MCF 10A (cell line): ENCODE measurements at regions of chr1 and their contacts with region 1.

Region 1: GRCh38 chr1:9292361-9293240 is at the start of gene SPSB1:
- DNase-seq: peak; percentile 70
- H3K4me3 Mint-ChIP-seq: peak within 1 kb of the TSS; percentile 60
- H3K27ac Mint-ChIP-seq: no peak within 1 kb of the TSS
- H3K4me1 Mint-ChIP-seq: no peaks in the 10 kb centered on the region
- H3K27me3 Mint-ChIP-seq: no peaks in the 10 kb centered on the region
- CTCF ChIP-seq: peak; percentile 19
- total RNA-seq, gene SPSB1: 8.2 and 16.2 TPM in 2 replicates

Region 2: GRCh38 chr1:9028921-9029705 is 263.5 kb before region 1 on chr1:
- CTCF ChIA-PET with region 1: no interaction called
- POLR2A ChIA-PET with region 1: no interaction called
- intact Hi-C with region 1: no loop called
- DNase-seq: no peak
- H3K4me3 Mint-ChIP-seq: no peak overlapping the region
- H3K27ac Mint-ChIP-seq: no peak overlapping the region
- H3K4me1 Mint-ChIP-seq: no peaks in the 10 kb centered on the region
- H3K27me3 Mint-ChIP-seq: no peaks in the 10 kb centered on the region
- CTCF ChIP-seq: no peak

Region 3: GRCh38 chr1:9270290-9270883 is 22.2 kb before region 1 on chr1:
- CTCF ChIA-PET with region 1: interaction called, 7 read pairs
- POLR2A ChIA-PET with region 1: interaction called, 6 read pairs
- intact Hi-C with region 1: loop called (anchors 1 kb)
- DNase-seq: peak; percentile 47
- H3K4me3 Mint-ChIP-seq: no peak overlapping the region
- H3K27ac Mint-ChIP-seq: no peak overlapping the region
- H3K4me1 Mint-ChIP-seq: peaks cover 12% of the 10 kb centered on the region
- H3K27me3 Mint-ChIP-seq: no peaks in the 10 kb centered on the region
- CTCF ChIP-seq: no peak

Region 4: DNA sequence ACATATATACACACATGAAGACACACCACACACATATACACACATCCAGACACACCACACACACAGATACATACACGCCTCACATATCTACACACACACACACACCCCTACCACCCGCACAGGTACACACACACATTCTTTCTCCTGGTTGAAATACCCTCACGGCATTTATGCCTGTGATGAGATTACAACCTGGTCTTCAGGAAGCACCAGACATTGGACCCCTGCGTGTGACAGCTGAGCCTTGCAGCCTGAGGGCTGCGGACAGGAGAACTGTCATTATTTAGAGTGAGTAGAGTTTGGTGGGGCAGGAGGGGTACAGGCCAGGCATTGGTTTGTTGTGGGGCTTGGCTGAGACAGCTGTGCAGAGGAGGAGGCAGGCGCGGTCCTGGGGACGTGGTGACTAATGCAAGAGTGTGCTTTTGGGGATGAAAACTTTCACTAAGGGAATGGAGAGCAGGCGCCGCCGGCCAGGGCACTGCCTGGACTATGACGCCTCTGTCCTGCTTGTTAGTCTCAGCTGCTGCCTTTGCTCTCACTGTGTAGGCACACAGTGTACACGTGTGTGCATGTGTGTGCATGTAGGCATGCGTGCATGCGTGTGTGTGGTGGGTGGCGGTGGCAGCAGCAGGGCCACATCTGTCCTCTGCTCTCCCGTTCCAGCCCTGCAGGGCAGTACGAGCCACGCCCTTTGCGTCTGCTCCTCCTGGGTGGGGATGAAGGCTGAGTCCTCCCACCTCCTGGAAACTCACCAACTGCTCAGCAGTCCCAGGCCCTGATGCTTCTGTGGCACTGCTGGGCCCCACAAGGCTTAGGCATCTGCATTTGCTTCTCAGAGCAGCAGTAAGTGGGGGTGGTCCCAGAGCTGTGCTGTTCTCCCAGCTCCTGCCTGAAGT is 57.7 kb after region 1 on chr1:
- CTCF ChIA-PET with region 1: no interaction called
- POLR2A ChIA-PET with region 1: interaction called, 3 read pairs
- intact Hi-C with region 1: loop called (anchors 10 kb)
- DNase-seq: peak; percentile 15
- H3K4me3 Mint-ChIP-seq: no peak overlapping the region
- H3K27ac Mint-ChIP-seq: no peak overlapping the region
- H3K4me1 Mint-ChIP-seq: peaks cover 23% of the 10 kb centered on the region
- H3K27me3 Mint-ChIP-seq: no peaks in the 10 kb centered on the region
- CTCF ChIP-seq: no peak

Region 5: DNA sequence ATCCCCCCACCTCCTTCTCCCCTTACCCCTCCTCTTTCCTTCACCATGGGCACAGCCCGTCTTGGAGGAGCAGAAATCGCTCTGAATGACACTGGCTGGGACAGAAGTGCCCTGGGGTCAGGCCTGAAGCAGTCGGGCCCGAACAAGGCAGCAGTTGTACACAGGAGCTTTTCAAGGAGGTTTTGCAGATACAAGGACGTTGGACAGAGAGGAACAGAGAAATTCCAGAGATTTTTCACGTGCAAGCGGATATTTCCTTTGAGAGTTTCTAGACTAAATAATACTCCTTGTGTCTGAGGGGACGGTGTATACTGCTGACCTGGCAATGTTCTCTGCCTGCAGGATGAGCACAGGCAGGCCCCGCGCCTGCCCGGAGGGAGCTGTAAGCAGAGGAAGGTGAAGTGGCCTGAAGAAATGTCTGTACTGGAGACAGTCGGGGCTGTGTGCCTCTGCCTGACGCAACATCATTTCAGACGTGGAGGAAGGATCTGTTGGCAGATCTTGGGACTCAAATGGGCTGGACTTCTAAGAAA is 151.4 kb after region 1 on chr1:
- CTCF ChIA-PET with region 1: interaction called, 3 read pairs
- POLR2A ChIA-PET with region 1: interaction called, 17 read pairs
- intact Hi-C with region 1: no loop called
- DNase-seq: peak; percentile 46
- H3K4me3 Mint-ChIP-seq: peak overlapping the region; percentile 62
- H3K27ac Mint-ChIP-seq: peak overlapping the region; percentile 96
- H3K4me1 Mint-ChIP-seq: peaks cover 36% of the 10 kb centered on the region
- H3K27me3 Mint-ChIP-seq: no peaks in the 10 kb centered on the region
- CTCF ChIP-seq: no peak

Region 6: DNA sequence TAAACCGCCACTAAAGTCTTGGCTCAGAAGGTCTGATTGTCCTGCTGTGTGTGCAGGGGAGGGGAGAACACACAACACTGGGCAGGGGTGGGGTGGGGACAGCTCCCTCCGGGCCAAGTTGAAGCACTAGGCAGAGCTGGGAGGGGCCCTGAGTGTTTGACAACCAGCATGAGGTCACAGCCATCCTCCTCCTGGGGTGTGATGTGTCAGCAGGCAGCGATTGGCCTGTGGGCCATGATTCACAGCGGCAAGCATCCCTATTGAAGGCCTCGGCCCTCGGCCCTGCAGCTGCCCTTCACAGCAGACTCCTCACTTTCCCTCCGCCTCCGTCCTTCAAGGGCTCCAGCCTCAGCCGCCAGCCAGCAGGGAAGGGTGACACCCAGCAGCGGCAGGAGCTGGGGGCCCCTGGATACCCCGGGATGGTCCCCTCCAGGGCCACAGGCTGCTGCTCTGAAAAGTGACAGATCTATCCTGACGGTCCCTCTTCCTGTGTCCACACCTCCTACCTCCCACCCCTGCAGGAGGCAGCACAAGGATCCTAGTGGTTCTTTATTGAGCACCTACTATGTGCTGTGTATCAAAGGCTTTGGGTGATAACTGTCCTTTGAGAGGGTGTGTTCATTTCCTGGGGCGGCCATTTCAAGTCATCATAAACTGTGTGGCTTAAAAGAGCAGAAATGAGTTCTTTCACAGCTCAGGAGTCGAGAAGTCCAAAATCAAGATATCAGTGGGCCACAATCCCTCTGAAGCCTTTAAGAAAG is 180.6 kb after region 1 on chr1:
- CTCF ChIA-PET with region 1: interaction called, 4 read pairs
- POLR2A ChIA-PET with region 1: interaction called, 32 read pairs
- intact Hi-C with region 1: loop called (anchors 5 kb)
- DNase-seq: peak; percentile 86
- H3K4me3 Mint-ChIP-seq: no peak overlapping the region
- H3K27ac Mint-ChIP-seq: peak overlapping the region; percentile 55
- H3K4me1 Mint-ChIP-seq: peaks cover 8% of the 10 kb centered on the region
- H3K27me3 Mint-ChIP-seq: peaks cover 5% of the 10 kb centered on the region
- CTCF ChIP-seq: no peak